ENCODE measurements at regions of chr1 and their contacts with region 1.

Region 1: DNA sequence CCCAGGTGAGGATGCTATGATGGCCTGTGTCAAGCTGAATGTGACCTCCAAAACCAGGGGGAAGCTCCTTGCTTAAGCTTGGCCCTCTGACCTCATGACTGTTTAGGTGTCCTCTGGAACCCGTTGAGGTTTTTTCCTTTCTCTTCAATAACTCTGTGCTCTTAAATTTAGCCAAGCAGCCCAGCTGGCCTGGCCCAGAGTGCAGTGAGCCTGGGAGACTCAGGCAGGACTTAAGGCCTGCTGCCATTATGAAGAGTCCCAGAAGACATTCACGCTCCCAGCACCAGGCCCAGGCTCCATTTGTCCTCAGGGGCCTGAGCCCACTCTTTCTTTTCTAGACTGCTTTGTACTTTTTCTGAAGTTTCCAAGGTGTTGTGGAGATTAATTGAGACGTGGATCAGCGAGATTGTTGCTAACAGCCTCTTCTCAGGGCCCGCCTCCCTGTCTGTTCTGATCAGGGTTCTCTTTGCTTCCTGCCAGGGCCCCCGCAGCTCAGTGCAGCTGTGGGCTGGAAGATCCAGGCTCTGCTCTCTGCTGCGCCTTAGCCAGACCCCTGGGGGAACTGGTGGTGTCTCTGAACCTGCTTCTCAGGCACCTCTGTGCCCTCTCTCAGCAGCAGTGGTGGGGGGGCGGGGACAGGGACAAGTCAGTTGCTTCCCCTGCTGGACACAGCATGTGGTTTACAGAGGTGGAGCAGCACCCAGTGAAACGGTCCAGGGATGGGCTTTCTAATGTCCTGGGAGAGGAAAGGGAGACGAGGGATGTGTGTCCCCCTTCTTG is 124.2 kb downstream of the GRIK3 start:
- DNase-seq: no peak

Region 2: DNA sequence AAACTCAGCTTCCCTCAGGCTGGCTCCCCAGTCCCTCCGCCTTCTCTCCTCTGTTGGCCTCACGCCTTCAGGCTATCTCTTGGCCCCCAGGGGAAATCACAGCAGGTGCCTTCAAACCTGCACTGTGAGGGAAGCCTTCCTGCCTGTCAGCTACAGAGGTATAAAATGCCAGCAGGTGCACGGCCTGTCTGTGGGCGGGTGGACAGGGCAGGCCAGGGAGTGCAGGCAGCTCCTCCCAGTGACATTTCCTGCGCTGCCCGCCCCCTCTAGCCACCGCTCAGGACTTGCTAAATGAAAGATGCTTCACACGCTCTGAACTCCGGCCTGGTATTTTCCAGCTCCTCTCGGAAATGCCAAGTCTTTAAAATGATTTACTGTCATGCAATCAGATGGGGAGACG is 54.0 kb before region 1 on chr1:
- intact Hi-C with region 1: loop called in 1 of 2 experiments (anchors 10 kb)
- DNase-seq: no peak

Region 3: GRCh38 chr1:37143800-37144199 is 233.7 kb after region 1 on chr1:
- intact Hi-C with region 1: no loop called
- DNase-seq: no peak